WTC11 (cell line): ENCODE measurements at regions of chr1 and their contacts with region 1.

Region 1: DNA sequence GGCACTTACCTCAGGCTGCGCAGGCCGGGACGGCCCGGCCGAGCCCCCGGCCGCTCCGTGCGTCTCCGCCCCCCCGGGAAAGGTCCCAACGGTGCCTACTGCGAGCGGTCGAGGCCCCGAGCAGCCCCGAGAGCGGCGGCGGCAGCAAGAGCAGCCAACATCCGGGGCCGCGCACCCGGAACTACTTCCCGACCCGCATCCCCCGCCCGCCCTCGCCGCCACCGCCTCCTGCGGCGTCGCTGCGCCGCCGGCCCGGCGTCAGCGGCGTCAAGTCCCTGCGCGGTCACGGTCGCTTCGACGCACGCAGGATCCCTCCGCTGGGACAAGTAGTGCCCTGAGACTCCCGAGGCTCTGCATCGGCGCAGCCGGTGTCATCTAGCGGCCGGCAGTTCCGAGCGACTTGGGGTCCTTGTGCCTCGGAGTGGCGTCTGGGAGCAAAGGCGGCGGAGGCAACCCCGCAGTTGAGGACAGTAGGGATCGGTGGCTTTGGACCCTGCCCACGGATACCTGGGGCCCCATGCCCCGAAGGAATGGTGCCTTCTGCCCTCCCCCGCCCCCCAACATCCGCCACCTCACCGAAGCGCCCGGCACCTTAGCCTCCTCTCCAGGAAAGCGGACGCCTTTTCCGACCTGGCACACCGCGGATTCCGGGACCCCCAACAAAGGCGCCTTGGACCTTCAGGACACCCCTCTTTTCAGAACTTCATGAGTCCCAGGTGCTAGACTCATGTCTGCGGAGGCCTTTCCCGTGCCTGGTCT is at the start of gene FOXJ3:
- DNase-seq: peak; percentile 93
- ATAC-seq: peak; percentile 83
- H3K4me3 Mint-ChIP-seq: peak within 1 kb of the TSS; percentile 95
- H3K27ac Mint-ChIP-seq: peak within 1 kb of the TSS; percentile 96
- H3K4me1 Mint-ChIP-seq: peaks cover 44% of the 10 kb centered on the region
- H3K27me3 Mint-ChIP-seq: no peaks in the 10 kb centered on the region
- CTCF ChIP-seq: no peak
- total RNA-seq, gene FOXJ3: 38.6 to 43.3 TPM (median 40.7 TPM) in 3 replicates

Region 2: GRCh38 chr1:40915581-40915980 is 1419.6 kb before region 1 on chr1:
- CTCF ChIA-PET with region 1: no interaction called
- POLR2A ChIA-PET with region 1: interaction called, 10 read pairs
- DNase-seq: no peak
- ATAC-seq: no peak
- H3K4me3 Mint-ChIP-seq: no peak overlapping the region
- H3K27ac Mint-ChIP-seq: no peak overlapping the region
- H3K4me1 Mint-ChIP-seq: peaks cover 4% of the 10 kb centered on the region; the same call in 1 of the 2 replicates
- H3K27me3 Mint-ChIP-seq: no peaks in the 10 kb centered on the region; the same call in 1 of the 2 replicates
- CTCF ChIP-seq: no peak

Region 3: DNA sequence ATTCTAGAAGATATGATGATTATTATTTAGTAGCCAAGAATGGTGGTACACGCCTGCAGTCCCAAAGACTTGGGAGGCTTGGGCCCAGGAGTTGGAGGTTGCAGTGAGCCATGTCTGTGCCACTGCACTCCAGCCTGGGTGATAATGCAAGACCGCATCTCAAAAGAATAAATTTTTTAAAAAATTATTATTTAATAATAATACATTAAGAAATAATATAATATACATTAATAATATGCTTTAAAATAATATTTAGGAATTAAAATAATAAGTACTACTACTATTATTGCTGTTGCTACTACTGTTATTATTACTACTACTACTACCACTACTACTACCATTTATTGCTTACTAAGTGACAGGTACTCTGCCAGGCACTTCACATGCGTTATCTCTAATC is 155.0 kb after region 1 on chr1:
- CTCF ChIA-PET with region 1: no interaction called
- POLR2A ChIA-PET with region 1: no interaction called
- DNase-seq: no peak
- ATAC-seq: no peak
- H3K4me3 Mint-ChIP-seq: no peak overlapping the region
- H3K27ac Mint-ChIP-seq: no peak overlapping the region
- H3K4me1 Mint-ChIP-seq: no peaks in the 10 kb centered on the region
- H3K27me3 Mint-ChIP-seq: peaks cover 12% of the 10 kb centered on the region
- CTCF ChIP-seq: no peak